ENCODE measurements at regions of chr2 and their contacts with region 1.

Region 1: GRCh38 chr2:192162392-192163042 is 32.2 kb downstream of the TMEFF2 start:
- DNase-seq: peak; percentile 70
- ATAC-seq: peak; percentile 51
- H3K4me3 ChIP-seq: peak overlapping the region in 2 of 5 experiments; percentile 4 to 9
- H3K4me3 Mint-ChIP-seq: peak overlapping the region; percentile 6
- H3K27ac ChIP-seq: no peak overlapping the region
- H3K27ac Mint-ChIP-seq: no peak overlapping the region
- H3K4me1 ChIP-seq: peaks cover 8 to 12% of the 10 kb centered on the region in 2 donors
- H3K4me1 Mint-ChIP-seq: peaks cover 10% of the 10 kb centered on the region
- H3K27me3 ChIP-seq: no peaks in the 10 kb centered on the region
- H3K27me3 Mint-ChIP-seq: peaks cover 15% of the 10 kb centered on the region
- CTCF ChIP-seq: peak; percentile 91

Region 2: GRCh38 chr2:191165176-191165643 is 997.3 kb before region 1 on chr2:
- CTCF ChIA-PET with region 1: interaction called, 9 read pairs
- POLR2A ChIA-PET with region 1: no interaction called
- intact Hi-C with region 1: loop called (anchors 5 kb)
- DNase-seq: peak; percentile 53
- ATAC-seq: peak; percentile 60
- H3K4me3 ChIP-seq: no peak overlapping the region
- H3K4me3 Mint-ChIP-seq: no peak overlapping the region
- H3K27ac ChIP-seq: no peak overlapping the region
- H3K27ac Mint-ChIP-seq: no peak overlapping the region
- H3K4me1 ChIP-seq: no peaks in the 10 kb centered on the region
- H3K4me1 Mint-ChIP-seq: peaks cover 3% of the 10 kb centered on the region
- H3K27me3 ChIP-seq: peaks cover 0 to 5% (median 0%) of the 10 kb centered on the region in 4 experiments
- H3K27me3 Mint-ChIP-seq: peaks cover 9% of the 10 kb centered on the region
- CTCF ChIP-seq: peak; percentile 79

Region 3: DNA sequence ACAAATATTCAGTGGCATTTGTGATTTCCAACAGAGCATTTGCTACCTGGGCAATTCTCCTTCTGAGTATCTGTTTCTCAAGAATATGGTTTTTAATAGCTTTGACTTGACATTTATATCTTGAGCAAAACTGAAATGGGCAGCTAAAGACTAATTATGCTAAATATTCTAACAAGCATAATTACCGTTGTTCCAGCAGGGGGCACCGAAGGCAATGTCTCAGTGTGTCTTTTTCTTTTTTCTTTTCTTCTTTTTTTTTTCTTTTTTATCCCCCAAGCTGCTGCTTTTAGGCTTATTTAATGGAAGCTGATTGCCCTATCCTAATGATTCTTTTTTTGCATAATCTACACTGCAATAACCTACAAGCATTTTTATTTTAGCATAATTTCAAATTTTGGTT is 623.4 kb before region 1 on chr2:
- CTCF ChIA-PET with region 1: interaction called, 15 read pairs
- POLR2A ChIA-PET with region 1: no interaction called
- intact Hi-C with region 1: no loop called
- DNase-seq: peak; percentile 10
- ATAC-seq: no peak
- H3K4me3 ChIP-seq: no peak overlapping the region
- H3K4me3 Mint-ChIP-seq: no peak overlapping the region
- H3K27ac ChIP-seq: no peak overlapping the region
- H3K27ac Mint-ChIP-seq: no peak overlapping the region
- H3K4me1 ChIP-seq: no peaks in the 10 kb centered on the region
- H3K4me1 Mint-ChIP-seq: no peaks in the 10 kb centered on the region
- H3K27me3 ChIP-seq: peaks cover 0 to 7% (median 0%) of the 10 kb centered on the region in 4 experiments
- H3K27me3 Mint-ChIP-seq: peaks cover 17% of the 10 kb centered on the region
- CTCF ChIP-seq: peak; percentile 61

Region 4: DNA sequence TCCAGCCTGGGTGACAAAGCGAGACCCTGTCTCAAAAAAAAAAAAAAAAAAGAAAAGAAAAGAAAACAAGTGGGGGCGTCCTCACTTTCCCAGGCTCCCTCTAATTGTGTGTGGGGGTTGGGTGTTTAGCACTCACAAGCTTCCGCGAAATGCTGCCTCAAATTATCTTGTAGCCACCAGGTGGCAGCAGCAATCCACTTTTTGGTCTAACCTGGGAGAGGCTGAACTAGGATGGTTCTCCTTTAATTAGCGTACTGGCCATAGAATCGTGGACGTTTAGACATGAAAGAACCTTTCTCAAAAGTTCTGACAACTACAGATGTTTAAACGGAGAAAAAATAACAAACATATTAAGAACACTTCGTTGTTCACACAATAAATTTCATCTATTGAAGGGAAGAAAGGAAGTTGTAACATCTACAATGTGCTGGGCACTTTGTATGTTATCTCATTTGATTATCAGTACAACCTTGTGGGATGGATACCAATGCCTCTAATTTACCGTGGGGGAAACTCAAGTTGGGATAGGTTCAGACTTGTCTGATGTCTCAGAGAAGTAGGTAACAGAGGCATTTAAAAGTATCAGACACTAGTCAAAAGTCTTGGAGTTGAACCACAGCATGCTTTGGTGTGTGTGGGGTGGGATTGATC is 607.3 kb before region 1 on chr2:
- CTCF ChIA-PET with region 1: interaction called, 303 read pairs
- POLR2A ChIA-PET with region 1: no interaction called
- intact Hi-C with region 1: loop called (anchors 1 kb)
- DNase-seq: peak; percentile 84
- ATAC-seq: peak; percentile 78
- H3K4me3 ChIP-seq: no peak overlapping the region
- H3K4me3 Mint-ChIP-seq: no peak overlapping the region
- H3K27ac ChIP-seq: no peak overlapping the region
- H3K27ac Mint-ChIP-seq: no peak overlapping the region
- H3K4me1 ChIP-seq: peaks cover 0 to 3% of the 10 kb centered on the region in 2 donors
- H3K4me1 Mint-ChIP-seq: peaks cover 3% of the 10 kb centered on the region
- H3K27me3 ChIP-seq: peaks cover 0 to 4% (median 0%) of the 10 kb centered on the region in 4 experiments
- H3K27me3 Mint-ChIP-seq: peaks cover 15% of the 10 kb centered on the region
- CTCF ChIP-seq: peak; percentile 86

Region 5: GRCh38 chr2:191566344-191566743 is 596.2 kb before region 1 on chr2:
- CTCF ChIA-PET with region 1: interaction called, 37 read pairs
- POLR2A ChIA-PET with region 1: no interaction called
- intact Hi-C with region 1: no loop called
- DNase-seq: peak; percentile 78
- ATAC-seq: peak; percentile 76
- H3K4me3 ChIP-seq: no peak overlapping the region
- H3K4me3 Mint-ChIP-seq: no peak overlapping the region
- H3K27ac ChIP-seq: no peak overlapping the region
- H3K27ac Mint-ChIP-seq: no peak overlapping the region
- H3K4me1 ChIP-seq: peaks cover 7 to 12% of the 10 kb centered on the region in 2 donors
- H3K4me1 Mint-ChIP-seq: peaks cover 12% of the 10 kb centered on the region
- H3K27me3 ChIP-seq: no peaks in the 10 kb centered on the region
- H3K27me3 Mint-ChIP-seq: peaks cover 24% of the 10 kb centered on the region
- CTCF ChIP-seq: peak; percentile 86

Region 6: GRCh38 chr2:191758518-191759507 is 403.7 kb before region 1 on chr2:
- CTCF ChIA-PET with region 1: interaction called, 21 read pairs
- POLR2A ChIA-PET with region 1: no interaction called
- intact Hi-C with region 1: loop called (anchors 1 kb)
- DNase-seq: peak; percentile 73
- ATAC-seq: peak; percentile 99
- H3K4me3 ChIP-seq: no peak overlapping the region
- H3K4me3 Mint-ChIP-seq: peak overlapping the region; percentile 4
- H3K27ac ChIP-seq: no peak overlapping the region
- H3K27ac Mint-ChIP-seq: no peak overlapping the region
- H3K4me1 ChIP-seq: peaks cover 3% of the 10 kb centered on the region in 2 donors
- H3K4me1 Mint-ChIP-seq: peaks cover 5% of the 10 kb centered on the region
- H3K27me3 ChIP-seq: no peaks in the 10 kb centered on the region
- H3K27me3 Mint-ChIP-seq: no peaks in the 10 kb centered on the region
- CTCF ChIP-seq: peak; percentile 84

Region 7: DNA sequence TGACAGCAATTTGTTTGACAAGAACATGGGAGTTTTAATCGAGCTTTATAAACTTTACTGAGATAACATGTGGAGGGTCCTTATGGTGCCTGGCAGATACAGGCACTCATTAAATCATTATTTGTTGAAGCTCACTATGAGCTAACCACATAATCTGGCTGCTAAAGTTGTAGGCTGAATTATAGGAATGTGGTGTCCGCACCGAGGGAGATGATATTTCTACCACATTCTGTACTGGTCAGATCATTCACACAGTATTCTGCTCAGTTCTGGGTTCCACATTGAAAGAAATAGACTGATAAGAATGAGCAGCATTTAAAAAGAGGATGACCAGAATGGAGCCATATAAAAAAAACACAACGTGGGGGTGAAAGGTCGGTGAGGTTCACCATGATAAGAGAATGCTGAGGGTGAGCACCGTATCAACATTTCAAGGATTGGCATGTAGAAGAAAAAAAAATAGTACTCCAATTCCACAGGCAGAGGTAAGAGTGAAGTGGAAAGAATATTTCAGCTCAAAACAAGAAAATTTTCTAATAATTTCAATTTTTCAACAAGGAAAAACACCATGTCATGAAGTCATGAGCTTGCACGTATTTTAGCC is 22.2 kb before region 1 on chr2:
- CTCF ChIA-PET with region 1: interaction called, 10 read pairs
- POLR2A ChIA-PET with region 1: no interaction called
- intact Hi-C with region 1: no loop called
- DNase-seq: no peak
- ATAC-seq: no peak
- H3K4me3 ChIP-seq: no peak overlapping the region
- H3K4me3 Mint-ChIP-seq: no peak overlapping the region
- H3K27ac ChIP-seq: no peak overlapping the region
- H3K27ac Mint-ChIP-seq: no peak overlapping the region
- H3K4me1 ChIP-seq: no peaks in the 10 kb centered on the region
- H3K4me1 Mint-ChIP-seq: no peaks in the 10 kb centered on the region
- H3K27me3 ChIP-seq: peaks cover 0 to 3% (median 0%) of the 10 kb centered on the region in 4 experiments
- H3K27me3 Mint-ChIP-seq: peaks cover 3% of the 10 kb centered on the region
- CTCF ChIP-seq: no peak

Region 8: DNA sequence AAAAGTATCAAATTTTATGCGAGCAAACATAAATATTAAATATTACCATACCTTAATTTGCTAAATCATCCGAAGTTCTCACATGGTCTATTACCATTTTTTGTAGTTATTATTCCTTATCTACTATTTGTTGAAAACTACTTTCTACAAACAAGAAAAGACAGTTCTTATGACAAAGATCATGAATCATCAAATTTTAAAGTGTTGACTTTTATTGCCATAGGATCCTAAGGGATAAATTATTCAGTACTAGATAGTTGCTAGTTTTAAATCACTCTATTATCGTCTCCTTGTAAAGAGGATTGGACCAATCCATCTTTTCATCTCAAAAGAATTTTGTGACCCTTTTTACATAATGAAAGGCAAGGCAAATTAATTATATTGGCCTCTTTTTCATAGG is 555.8 kb after region 1 on chr2:
- CTCF ChIA-PET with region 1: no interaction called
- POLR2A ChIA-PET with region 1: no interaction called
- intact Hi-C with region 1: no loop called
- DNase-seq: no peak
- ATAC-seq: no peak
- H3K4me3 ChIP-seq: no peak overlapping the region
- H3K4me3 Mint-ChIP-seq: no peak overlapping the region
- H3K27ac ChIP-seq: no peak overlapping the region
- H3K27ac Mint-ChIP-seq: no peak overlapping the region
- H3K4me1 ChIP-seq: no peaks in the 10 kb centered on the region
- H3K4me1 Mint-ChIP-seq: no peaks in the 10 kb centered on the region
- H3K27me3 ChIP-seq: no peaks in the 10 kb centered on the region
- H3K27me3 Mint-ChIP-seq: no peaks in the 10 kb centered on the region
- CTCF ChIP-seq: no peak